Activated CD4-positive, alpha-beta memory T cell treated with anti-CD3 and anti-CD28 coated beads for 36 hours (primary cell): ENCODE measurements at regions of chr10 and their contacts with region 1.

Region 1: GRCh38 chr10:48981310-48981907 is 41.8 kb upstream of the LRRC18 start:
- DNase-seq: peak; percentile 65
- H3K4me3 Mint-ChIP-seq: no peak overlapping the region
- H3K27ac Mint-ChIP-seq: no peak overlapping the region
- H3K4me1 Mint-ChIP-seq: no peaks in the 10 kb centered on the region
- H3K27me3 Mint-ChIP-seq: no peaks in the 10 kb centered on the region

Region 2: GRCh38 chr10:49164559-49165188 is 183.3 kb after region 1 on chr10:
- CTCF ChIA-PET with region 1: interaction called, 6 read pairs
- POLR2A ChIA-PET with region 1: no interaction called
- intact Hi-C with region 1: loop called (anchors 2 kb)
- DNase-seq: peak; percentile 60
- H3K4me3 Mint-ChIP-seq: no peak overlapping the region
- H3K27ac Mint-ChIP-seq: peak overlapping the region; percentile 14
- H3K4me1 Mint-ChIP-seq: peaks cover 41% of the 10 kb centered on the region
- H3K27me3 Mint-ChIP-seq: peaks cover 6% of the 10 kb centered on the region

Region 3: DNA sequence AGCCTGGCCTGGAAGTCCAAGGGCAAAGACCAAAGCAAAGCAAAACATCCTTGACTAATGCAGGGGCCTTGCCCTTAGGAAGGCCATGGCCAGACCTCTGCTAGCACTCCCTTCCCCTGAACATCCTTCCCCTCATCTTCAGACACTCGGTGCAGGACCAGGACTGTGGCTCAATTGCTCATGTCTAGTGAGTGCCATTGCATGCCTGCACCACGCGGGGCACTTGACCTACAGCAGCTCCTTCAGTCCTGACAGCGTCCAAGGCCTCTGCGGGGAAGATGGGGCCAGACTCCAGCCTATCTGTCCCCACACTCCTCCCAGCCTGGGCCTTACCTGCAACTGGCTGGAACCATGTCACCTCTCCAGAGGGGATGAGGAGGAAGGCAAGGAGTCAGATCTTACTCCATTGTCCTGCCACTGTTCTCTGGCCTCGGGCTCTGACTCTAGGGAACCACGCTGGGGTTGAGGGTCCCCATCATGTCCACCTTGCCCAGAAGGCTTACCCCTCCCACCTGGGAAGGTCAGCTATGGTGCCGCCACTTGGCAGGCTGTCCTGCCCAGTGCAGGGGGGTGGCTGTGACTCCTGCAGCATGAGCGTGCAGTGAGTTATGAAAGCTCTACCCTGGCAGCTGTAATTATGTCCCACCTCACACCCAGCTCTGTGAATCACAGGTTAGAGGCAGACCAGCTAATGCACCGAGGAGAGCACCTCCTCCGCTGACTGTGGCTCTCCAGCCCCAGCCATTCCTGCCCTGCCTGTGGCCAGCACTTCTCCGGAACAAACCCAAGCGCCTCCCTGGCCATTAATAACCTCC is 398.4 kb after region 1 on chr10:
- CTCF ChIA-PET with region 1: no interaction called
- POLR2A ChIA-PET with region 1: no interaction called
- intact Hi-C with region 1: loop called (anchors 10 kb)
- DNase-seq: no peak
- H3K4me3 Mint-ChIP-seq: no peak overlapping the region
- H3K27ac Mint-ChIP-seq: no peak overlapping the region
- H3K4me1 Mint-ChIP-seq: no peaks in the 10 kb centered on the region
- H3K27me3 Mint-ChIP-seq: peaks cover 3% of the 10 kb centered on the region